H1 (cell line): ENCODE measurements at regions of chr15 and their contacts with region 1.

Region 1: GRCh38 chr15:97903971-97904572 is 56.4 kb upstream of the ARRDC4 start:
- DNase-seq: peak; percentile 70 to 87
- H3K4me3 ChIP-seq: no peak overlapping the region
- H3K27ac ChIP-seq: no peak overlapping the region
- H3K4me1 ChIP-seq: peaks cover 0 to 2% (median 0%) of the 10 kb centered on the region in 4 experiments; a peak in 2 of 7 replicates
- H3K27me3 ChIP-seq: peaks cover 0 to 2% (median 0%) of the 10 kb centered on the region in 4 experiments; a peak in 2 of 7 replicates
- CTCF ChIP-seq: peak; percentile 75 to 96 (median 77)
- EP300 ChIP-seq: no peak
- POLR2A ChIP-seq: no peak
- RAD21 ChIP-seq: peak; percentile 81 to 85

Region 2: GRCh38 chr15:97817276-97817890 is 86.7 kb before region 1 on chr15:
- CTCF ChIA-PET with region 1: no interaction called
- POLR2A ChIA-PET with region 1: no interaction called
- DNase-seq: no peak
- H3K4me3 ChIP-seq: no peak overlapping the region
- H3K27ac ChIP-seq: no peak overlapping the region
- H3K4me1 ChIP-seq: no peaks in the 10 kb centered on the region
- H3K27me3 ChIP-seq: no peaks in the 10 kb centered on the region
- CTCF ChIP-seq: no peak
- EP300 ChIP-seq: no peak
- POLR2A ChIP-seq: no peak
- RAD21 ChIP-seq: no peak

Region 3: GRCh38 chr15:97875513-97876280 is 28.4 kb before region 1 on chr15:
- CTCF ChIA-PET with region 1: interaction called, 11 read pairs
- POLR2A ChIA-PET with region 1: no interaction called
- DNase-seq: no peak
- H3K4me3 ChIP-seq: peak overlapping the region in 1 of 4 experiments; percentile 34; a peak in 1 of 8 replicates
- H3K27ac ChIP-seq: no peak overlapping the region
- H3K4me1 ChIP-seq: no peaks in the 10 kb centered on the region
- H3K27me3 ChIP-seq: no peaks in the 10 kb centered on the region
- CTCF ChIP-seq: peak in 2 of 3 experiments; percentile 6 to 30; a peak in 2 of 4 replicates
- EP300 ChIP-seq: no peak
- POLR2A ChIP-seq: no peak
- RAD21 ChIP-seq: peak in 1 of 2 experiments; percentile 5; a peak in 1 of 4 replicates

Region 4: DNA sequence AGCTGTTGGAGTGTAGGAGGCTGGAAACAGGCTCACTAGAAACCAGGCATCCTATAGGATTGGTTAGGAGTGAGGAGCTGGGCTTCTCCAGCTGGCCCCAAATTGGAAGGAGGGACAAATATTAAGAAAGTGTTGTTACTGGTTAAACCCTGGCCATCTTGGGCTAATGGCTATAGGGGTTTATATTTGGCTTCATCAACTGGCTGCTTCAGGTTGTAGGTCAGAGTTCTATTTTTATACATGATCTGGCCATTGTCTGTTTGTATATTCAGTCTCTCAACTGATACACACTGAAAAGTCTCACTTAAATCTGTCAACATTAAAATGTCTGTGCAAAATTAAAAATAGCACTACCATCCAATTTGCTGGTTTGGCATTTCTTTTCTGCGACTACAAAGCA is 13.8 kb before region 1 on chr15:
- CTCF ChIA-PET with region 1: interaction called, 31 read pairs
- POLR2A ChIA-PET with region 1: no interaction called
- DNase-seq: no peak
- H3K4me3 ChIP-seq: no peak overlapping the region
- H3K27ac ChIP-seq: no peak overlapping the region
- H3K4me1 ChIP-seq: no peaks in the 10 kb centered on the region
- H3K27me3 ChIP-seq: no peaks in the 10 kb centered on the region; a peak in 1 of 7 replicates
- CTCF ChIP-seq: no peak
- EP300 ChIP-seq: no peak
- POLR2A ChIP-seq: no peak
- RAD21 ChIP-seq: no peak

Region 5: DNA sequence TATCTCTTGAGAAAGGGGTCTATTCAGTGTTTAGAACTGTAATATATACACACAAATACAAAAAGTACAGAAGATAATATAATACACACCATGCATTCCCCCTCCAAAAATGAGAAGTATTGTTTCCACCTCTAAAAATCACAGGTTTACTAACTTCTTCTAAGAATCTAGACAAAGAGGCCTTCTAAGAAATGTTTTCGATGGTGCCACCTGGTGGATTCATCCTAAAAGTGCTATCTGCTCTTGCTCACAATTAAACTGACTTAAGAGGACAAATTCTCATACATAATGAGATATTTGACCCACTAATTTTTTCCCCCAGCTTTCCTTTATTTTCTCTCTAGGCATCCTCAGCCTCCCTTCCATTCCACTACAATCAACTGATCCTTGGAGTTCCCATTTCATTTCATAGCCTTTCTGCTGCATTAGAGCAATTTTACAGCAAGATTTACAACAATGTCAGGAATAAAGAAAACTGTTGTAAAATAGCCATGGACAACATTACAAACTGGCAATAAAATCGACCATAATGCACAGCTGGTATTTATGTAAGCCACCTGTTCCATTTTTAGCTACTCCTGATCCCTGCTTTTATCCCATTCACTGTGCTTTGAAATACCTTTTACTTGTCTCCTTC is 181.0 kb after region 1 on chr15:
- CTCF ChIA-PET with region 1: interaction called, 13 read pairs
- POLR2A ChIA-PET with region 1: no interaction called
- DNase-seq: no peak
- H3K4me3 ChIP-seq: no peak overlapping the region
- H3K27ac ChIP-seq: no peak overlapping the region
- H3K4me1 ChIP-seq: no peaks in the 10 kb centered on the region
- H3K27me3 ChIP-seq: no peaks in the 10 kb centered on the region
- CTCF ChIP-seq: peak in 2 of 3 experiments; percentile 38 to 57; a peak in 2 of 4 replicates
- EP300 ChIP-seq: no peak
- POLR2A ChIP-seq: no peak
- RAD21 ChIP-seq: peak; percentile 56 to 61